PC-9 (cell line): ENCODE measurements at regions of chr1 and their contacts with region 1.

Region 1: GRCh38 chr1:156060937-156061636 is at the start of gene RAB25:
- DNase-seq: peak; percentile 90 to 92
- H3K4me3 ChIP-seq: peak within 1 kb of the TSS; percentile 64
- H3K27ac ChIP-seq: peak within 1 kb of the TSS; percentile 61
- H3K4me1 ChIP-seq: peaks cover 18% of the 10 kb centered on the region
- H3K27me3 ChIP-seq: no peaks in the 10 kb centered on the region
- CTCF ChIP-seq: no peak
- total RNA-seq, gene RAB25: 129 and 194 TPM in 2 replicates

Region 2: DNA sequence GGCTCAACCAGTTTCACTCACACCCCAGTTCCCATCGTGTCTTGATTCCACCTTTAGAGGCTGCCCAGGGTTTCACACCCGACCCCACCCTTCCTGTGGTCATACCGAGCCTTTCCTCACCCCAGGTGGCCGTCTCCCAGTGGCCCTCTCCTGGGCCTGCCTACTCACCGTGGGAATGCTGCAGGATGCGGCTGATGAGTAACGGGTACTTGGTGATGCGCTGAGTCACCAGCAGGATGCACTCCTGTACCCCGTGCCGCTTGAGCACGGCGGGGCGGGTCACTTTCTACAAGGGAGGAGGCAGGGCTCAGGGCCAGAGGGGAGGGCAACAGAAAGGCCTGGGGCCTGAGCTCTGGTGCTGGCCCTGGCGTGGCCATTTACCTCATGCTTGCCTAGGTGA is 99.2 kb before region 1 on chr1:
- CTCF ChIA-PET with region 1: no interaction called
- POLR2A ChIA-PET with region 1: no interaction called
- intact Hi-C with region 1: loop called (anchors 1 kb)
- DNase-seq: peak; percentile 98 to 99
- H3K4me3 ChIP-seq: no peak overlapping the region
- H3K27ac ChIP-seq: peak overlapping the region; percentile 99
- H3K4me1 ChIP-seq: peaks cover 38% of the 10 kb centered on the region
- H3K27me3 ChIP-seq: no peaks in the 10 kb centered on the region
- CTCF ChIP-seq: no peak; the same call in 1 of the 2 replicates

Region 3: DNA sequence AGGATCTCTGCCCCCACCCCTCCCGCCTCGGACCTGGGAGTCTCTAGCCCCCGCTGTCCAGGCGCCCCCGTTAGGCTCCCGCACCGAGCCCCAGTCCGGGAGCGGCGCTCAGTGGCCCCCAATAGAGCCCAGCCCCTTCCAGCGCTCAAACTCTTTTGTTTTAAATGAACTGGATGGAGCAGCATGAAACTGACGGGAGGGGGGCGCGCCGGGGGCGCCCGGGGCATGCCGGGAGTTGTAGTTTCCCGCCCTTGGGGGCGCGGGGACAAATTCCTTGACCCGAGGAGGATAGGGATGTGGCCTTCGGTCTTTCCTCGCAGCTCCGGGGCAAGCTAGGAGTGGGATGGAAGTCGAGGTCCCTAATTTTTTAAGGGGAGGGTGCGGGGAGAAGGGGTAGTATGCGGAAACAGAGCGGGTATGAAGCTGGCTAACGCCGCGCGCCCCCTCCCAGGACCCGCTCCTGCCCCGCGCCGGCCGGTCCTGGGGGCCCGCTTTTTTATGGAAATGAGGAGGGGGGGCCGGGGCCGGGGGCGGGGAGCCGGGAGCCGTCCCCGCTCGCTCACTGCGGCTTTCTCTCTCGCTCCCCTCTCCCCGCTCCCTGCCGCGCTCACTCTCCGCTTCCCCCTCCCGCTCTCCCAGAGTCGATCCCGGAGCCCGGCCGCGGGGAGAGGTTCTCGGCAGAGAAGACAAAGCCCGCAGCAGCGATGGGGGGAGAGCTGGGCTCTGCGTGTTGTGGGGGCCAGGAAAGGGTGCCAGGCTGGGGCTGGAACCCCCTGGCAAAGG is 21.4 kb after region 1 on chr1 and contains the start of gene MEX3A:
- CTCF ChIA-PET with region 1: interaction called, 3 read pairs
- POLR2A ChIA-PET with region 1: interaction called, 6 read pairs
- intact Hi-C with region 1: loop called (anchors 2 kb)
- DNase-seq: peak; percentile 44 to 79
- H3K4me3 ChIP-seq: peak within 1 kb of the TSS; percentile 100
- H3K27ac ChIP-seq: no peak within 1 kb of the TSS
- H3K4me1 ChIP-seq: peaks cover 21% of the 10 kb centered on the region
- H3K27me3 ChIP-seq: no peaks in the 10 kb centered on the region
- CTCF ChIP-seq: no peak
- total RNA-seq, gene MEX3A: 6.6 and 7.2 TPM in 2 replicates

Region 4: GRCh38 chr1:156601122-156601830 is 540.2 kb after region 1 on chr1 and contains the start of gene GPATCH4:
- CTCF ChIA-PET with region 1: interaction called, 12 read pairs
- POLR2A ChIA-PET with region 1: interaction called, 8 read pairs
- intact Hi-C with region 1: no loop called
- DNase-seq: peak; percentile 63 to 65
- H3K4me3 ChIP-seq: peak within 1 kb of the TSS; percentile 77
- H3K27ac ChIP-seq: peak within 1 kb of the TSS; percentile 70
- H3K4me1 ChIP-seq: peaks cover 16% of the 10 kb centered on the region
- H3K27me3 ChIP-seq: no peaks in the 10 kb centered on the region
- CTCF ChIP-seq: no peak
- total RNA-seq, gene GPATCH4: 17.5 and 17.6 TPM in 2 replicates